ENCODE measurements at regions of chr3 and their contacts with region 1.

Region 1: DNA sequence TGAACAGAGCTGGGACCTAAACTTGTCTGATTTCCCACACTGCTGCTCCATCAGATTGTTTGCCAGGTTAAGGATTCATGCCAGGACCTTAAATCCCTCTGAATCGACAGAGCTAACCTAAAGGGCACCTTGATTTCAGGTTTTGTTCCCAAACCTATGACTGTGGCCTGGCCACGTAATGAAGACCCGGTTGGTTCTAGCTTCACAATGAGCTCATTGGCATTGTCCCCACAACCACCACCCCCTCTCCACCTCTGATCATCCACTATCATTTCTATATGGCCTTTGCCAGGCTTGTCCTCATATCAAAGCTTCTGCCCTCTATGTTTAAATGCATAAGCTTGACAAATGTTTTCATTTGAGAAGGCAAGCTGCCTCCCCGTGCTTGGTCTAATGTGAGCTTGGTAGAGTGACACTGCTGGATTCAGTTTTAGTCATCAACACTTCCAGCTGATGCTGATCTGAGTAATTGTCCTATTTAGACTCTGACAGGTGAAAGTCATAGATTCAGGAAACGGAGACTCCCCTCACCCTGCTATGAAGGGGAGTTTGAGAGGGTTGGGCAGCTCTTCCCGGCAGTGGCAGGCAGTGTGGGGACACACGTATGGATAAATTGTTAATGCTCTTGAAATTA is 407.1 kb upstream of the CFAP20DC start:
- DNase-seq: peak; percentile 77
- H3K4me3 Mint-ChIP-seq: no peak overlapping the region
- H3K27ac Mint-ChIP-seq: peak overlapping the region; percentile 59
- H3K4me1 Mint-ChIP-seq: peaks cover 34% of the 10 kb centered on the region
- H3K27me3 Mint-ChIP-seq: no peaks in the 10 kb centered on the region

Region 2: DNA sequence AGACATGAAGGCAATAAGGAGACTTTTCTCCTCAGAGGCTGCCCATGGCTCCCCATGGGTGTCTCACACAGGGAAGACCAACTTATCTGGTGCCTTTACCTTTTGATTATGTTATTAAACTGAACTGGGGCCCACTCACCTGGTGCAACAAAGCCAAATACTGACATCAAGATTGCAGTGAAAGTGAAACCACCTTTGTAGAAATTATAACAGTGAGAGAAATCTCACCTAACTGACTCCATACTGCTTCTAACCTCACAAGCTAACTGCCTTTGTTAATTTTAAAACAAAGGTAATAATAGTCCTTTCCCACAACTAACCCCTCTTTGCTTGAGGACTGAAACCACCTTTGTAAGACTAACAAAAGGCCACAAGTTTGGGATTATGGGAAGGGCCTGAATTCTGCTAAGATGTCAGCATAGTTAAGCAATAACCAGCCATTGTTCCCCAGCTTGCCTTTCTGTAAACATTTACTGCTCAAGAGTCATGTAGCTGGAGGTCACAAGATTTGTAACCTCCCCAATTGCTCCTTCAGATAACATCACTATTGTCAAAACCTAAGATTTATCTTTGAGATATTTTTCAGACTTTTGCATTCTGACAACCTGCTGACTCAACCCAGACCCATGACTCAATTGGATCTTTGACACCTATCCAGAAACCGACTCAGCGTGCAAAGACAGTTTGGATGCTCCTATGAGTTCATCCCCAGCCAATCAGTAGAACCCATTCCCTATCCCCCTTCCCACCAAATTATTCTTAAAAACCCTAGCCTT is 13.2 kb after region 1 on chr3:
- intact Hi-C with region 1: loop called (anchors 2 kb)
- DNase-seq: peak; percentile 61
- H3K4me3 Mint-ChIP-seq: no peak overlapping the region
- H3K27ac Mint-ChIP-seq: peak overlapping the region; percentile 56
- H3K4me1 Mint-ChIP-seq: peaks cover 40% of the 10 kb centered on the region
- H3K27me3 Mint-ChIP-seq: no peaks in the 10 kb centered on the region